Dendritic cell treated with granulocyte-macrophage colony-stimulating factor and Interleukin-4, amounts not matched to agents 40 ng/mL and 50 ng/mL, for 4 days (primary cell): ENCODE measurements at regions of chr1 and their contacts with region 1.

Region 1: GRCh38 chr1:204506961-204507387 is 9.2 kb upstream of the MDM4 start:
- H3K4me3 Mint-ChIP-seq: peak overlapping the region; percentile 90
- H3K27ac Mint-ChIP-seq: peak overlapping the region; percentile 92
- H3K4me1 Mint-ChIP-seq: peaks cover 37% of the 10 kb centered on the region
- H3K27me3 Mint-ChIP-seq: no peaks in the 10 kb centered on the region

Region 2: DNA sequence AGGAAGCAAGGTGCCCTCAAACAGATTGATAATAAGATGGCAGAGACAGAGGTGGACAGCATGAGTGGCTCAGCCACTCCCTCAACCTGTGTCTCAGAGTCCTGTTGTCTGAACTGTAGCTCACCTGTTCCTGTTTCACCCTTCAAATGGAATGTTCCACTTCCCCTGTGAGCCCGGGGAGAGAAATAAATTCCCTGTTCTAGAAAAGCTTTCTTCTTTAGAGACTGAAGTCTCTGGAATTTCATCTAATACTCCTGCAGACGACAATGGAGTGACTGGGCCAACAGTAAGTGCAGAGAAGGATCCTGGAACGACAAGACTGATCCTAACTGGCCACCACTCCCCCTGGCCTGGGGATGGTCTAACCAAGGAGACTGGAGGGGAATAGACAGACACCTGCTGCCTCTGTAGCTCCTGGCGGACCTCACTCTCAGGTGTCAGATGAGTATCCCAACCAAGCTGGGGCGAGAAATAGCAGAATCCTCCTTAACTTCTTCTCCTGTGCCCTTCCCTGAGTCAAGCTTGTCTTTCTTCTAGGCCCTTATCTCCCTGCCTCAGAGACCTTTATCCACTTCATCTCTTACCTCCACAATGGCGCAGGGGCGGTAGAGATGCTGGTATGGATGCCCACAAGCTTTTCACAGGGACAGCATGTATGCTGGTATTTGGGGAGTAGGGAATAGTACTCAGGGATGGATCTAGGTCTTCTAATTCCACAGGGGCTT is 192.6 kb before region 1 on chr1:
- intact Hi-C with region 1: no loop called
- H3K4me3 Mint-ChIP-seq: no peak overlapping the region
- H3K27ac Mint-ChIP-seq: no peak overlapping the region
- H3K4me1 Mint-ChIP-seq: no peaks in the 10 kb centered on the region
- H3K27me3 Mint-ChIP-seq: peaks cover 13% of the 10 kb centered on the region

Region 3: GRCh38 chr1:204411451-204412204 is 95.3 kb before region 1 on chr1 and contains the start of gene PPP1R15B:
- intact Hi-C with region 1: loop called (anchors 5 kb)
- H3K4me3 Mint-ChIP-seq: peak within 1 kb of the TSS; percentile 99
- H3K27ac Mint-ChIP-seq: peak within 1 kb of the TSS; percentile 97
- H3K4me1 Mint-ChIP-seq: peaks cover 28% of the 10 kb centered on the region
- H3K27me3 Mint-ChIP-seq: no peaks in the 10 kb centered on the region

Region 4: GRCh38 chr1:204446370-204447111 is 60.4 kb before region 1 on chr1:
- intact Hi-C with region 1: loop called (anchors 1 kb)
- H3K4me3 Mint-ChIP-seq: no peak overlapping the region
- H3K27ac Mint-ChIP-seq: peak overlapping the region; percentile 11
- H3K4me1 Mint-ChIP-seq: peaks cover 17% of the 10 kb centered on the region
- H3K27me3 Mint-ChIP-seq: no peaks in the 10 kb centered on the region

Region 5: DNA sequence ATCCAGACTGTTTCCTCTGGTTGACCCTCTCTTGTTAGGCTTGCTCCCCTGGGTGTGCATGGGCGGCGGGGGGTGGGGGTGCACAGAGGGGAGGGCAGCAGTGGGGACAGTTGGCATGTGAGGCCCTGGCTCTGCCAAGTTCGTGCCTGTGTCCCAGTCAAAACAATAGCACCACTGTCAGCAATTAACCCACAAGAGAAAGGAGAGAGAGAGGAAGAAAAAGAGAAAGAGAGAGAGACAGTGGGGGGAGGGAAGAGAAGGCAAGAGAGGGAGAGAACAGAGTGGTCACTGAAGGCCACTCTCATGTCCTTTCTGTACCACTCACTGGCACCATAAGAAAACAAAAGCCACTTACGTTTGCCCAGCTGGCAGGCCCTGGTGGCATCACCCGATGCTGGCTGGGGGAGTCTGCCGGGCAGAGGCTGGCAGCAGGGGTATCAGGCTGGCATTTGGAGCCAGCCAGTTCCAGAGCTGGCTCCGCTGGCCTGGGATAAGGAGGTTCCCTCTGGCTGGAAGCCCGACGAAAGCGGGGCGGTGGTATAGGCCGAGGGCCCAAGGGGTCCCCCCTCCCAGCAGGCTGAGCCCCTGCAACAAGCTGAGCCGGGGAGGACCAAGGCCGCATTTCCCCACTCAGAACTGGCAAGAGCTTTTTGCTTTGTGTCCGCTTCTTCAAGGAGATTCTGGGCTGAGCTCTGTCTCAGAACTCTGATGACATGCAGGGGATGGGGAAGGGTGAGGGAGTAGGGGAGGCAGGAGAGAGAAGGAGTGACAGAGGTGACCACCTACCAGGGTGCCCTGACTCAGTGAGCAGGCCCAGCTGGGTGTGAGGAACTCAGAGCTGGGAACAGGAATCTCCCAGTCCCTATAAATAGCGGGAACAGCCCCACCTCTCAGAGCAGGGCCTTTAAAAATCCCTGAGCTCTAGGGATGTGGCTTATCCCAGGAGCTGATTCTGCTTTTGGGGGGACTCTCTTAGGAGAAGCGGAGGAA is 40.3 kb before region 1 on chr1:
- intact Hi-C with region 1: no loop called
- H3K4me3 Mint-ChIP-seq: no peak overlapping the region
- H3K27ac Mint-ChIP-seq: peak overlapping the region; percentile 78
- H3K4me1 Mint-ChIP-seq: peaks cover 45% of the 10 kb centered on the region
- H3K27me3 Mint-ChIP-seq: no peaks in the 10 kb centered on the region